ENCODE measurements at regions of chr9 and their contacts with region 1.

Region 1: DNA sequence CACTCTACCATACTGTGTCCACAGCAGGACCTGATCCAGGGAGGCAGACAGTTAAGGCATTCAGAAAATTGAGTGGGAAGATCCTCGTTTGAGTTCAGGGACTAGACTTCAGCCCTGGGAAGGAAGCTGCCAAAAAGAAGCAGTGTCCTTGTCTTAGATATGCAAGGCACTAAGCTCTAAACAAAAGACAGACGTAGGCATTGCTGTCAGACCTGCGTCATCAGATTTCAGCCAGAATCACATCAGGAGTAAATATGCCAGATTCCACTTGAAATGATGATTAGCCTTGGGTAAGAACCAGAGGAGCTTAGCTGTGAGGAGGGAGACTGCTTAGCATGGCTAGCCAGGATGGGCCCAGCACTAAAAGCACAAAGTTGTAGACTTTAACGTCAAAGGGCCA is 56.7 kb downstream of the MAMDC2 start:
- DNase-seq: no peak
- ATAC-seq: peak in 2 of 4 donors; percentile 30 to 61
- H3K4me3 ChIP-seq: no peak overlapping the region
- H3K27ac ChIP-seq: peak overlapping the region in 1 of 12 donors; percentile 62
- H3K4me1 ChIP-seq: no peaks in the 10 kb centered on the region
- H3K27me3 ChIP-seq: no peaks in the 10 kb centered on the region
- CTCF ChIP-seq: no peak
- POLR2A ChIP-seq: no peak

Region 2: DNA sequence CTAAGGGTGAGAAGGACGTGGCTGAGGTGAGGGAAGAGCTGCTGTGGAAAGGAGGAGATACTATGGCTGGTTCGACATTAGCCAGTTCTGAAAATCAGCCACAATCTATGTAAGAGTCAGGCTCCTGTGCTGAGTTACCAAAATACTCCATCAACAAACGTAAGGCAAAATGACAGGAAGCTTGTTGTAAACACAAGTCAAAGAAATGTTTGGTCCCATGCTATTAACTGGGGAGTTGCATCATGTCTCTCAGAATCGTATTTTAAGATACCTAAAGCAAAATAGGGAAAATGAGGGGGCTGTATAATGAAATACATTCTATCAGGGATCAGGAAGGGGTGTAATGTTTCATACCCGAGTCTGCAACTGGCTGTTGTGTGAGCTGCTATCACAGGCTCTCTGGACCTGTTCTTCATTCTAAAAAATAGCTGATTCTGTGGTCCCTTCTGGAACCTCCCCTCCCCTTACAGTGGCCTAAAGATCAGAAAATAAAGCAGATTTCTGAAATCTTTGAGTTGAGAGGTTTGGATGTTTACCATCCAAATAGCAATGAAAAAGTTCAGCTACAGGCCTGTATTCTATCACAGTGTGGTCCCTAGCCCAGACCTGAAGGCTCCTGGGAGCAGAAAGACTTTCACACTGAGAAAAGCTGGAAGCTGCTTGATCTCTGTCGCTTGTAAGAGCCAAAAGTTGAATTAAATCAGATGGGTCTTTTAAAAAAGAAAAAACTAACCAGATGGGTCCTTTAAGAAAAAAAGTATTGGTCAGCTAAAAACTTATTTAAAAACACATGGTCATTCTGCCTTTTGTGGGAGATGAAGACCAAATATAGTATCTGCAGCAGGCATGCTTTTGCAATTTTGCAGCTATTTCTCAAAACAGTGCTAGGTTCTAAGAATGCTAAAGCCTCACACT is 60.6 kb after region 1 on chr9:
- intact Hi-C with region 1: loop called in 1 of 10 experiments (anchors 10 kb)
- DNase-seq: no peak
- ATAC-seq: peak in 2 of 4 donors; percentile 48 to 65
- H3K4me3 ChIP-seq: no peak overlapping the region
- H3K27ac ChIP-seq: peak overlapping the region in 11 of 12 donors; percentile 2 to 71 (median 9)
- H3K4me1 ChIP-seq: peaks cover 0 to 26% (median 5%) of the 10 kb centered on the region in 12 donors
- H3K27me3 ChIP-seq: no peaks in the 10 kb centered on the region
- CTCF ChIP-seq: no peak
- POLR2A ChIP-seq: no peak